GM12878 (cell line): ENCODE measurements at regions of chr3 and their contacts with region 1.

Region 1: GRCh38 chr3:8769088-8769822 is at the start of gene OXTR:
- DNase-seq: no peak
- ATAC-seq: peak; percentile 83
- H3K4me3 ChIP-seq: peak within 1 kb of the TSS; percentile 72
- H3K27ac ChIP-seq: peak within 1 kb of the TSS; percentile 18; the same call in 1 of the 2 replicates
- H3K4me1 ChIP-seq: peaks cover 14% of the 10 kb centered on the region; the same call in 1 of the 2 replicates
- H3K27me3 ChIP-seq: no peaks in the 10 kb centered on the region
- CTCF ChIP-seq: peak; percentile 96 to 98 (median 98); a peak in 5 of 6 replicates
- EP300 ChIP-seq: no peak
- POLR2A ChIP-seq: 0 out of 2 replicates have a peak, but pooled peaks have one; percentile 16
- RAD21 ChIP-seq: peak; percentile 70
- polyA plus RNA-seq, gene OXTR: 0.43 to 1.2 TPM

Region 2: GRCh38 chr3:8201886-8202285 is 567.4 kb before region 1 on chr3:
- CTCF ChIA-PET with region 1: no interaction called
- POLR2A ChIA-PET with region 1: no interaction called
- RAD21 ChIA-PET with region 1: no interaction called
- SMC1A ChIA-PET with region 1: no interaction called
- in situ Hi-C with region 1: no loop called
- intact Hi-C with region 1: no loop called
- DNase-seq: no peak
- ATAC-seq: no peak
- H3K4me3 ChIP-seq: no peak overlapping the region
- H3K27ac ChIP-seq: no peak overlapping the region
- H3K4me1 ChIP-seq: no peaks in the 10 kb centered on the region
- H3K27me3 ChIP-seq: no peaks in the 10 kb centered on the region
- CTCF ChIP-seq: no peak
- EP300 ChIP-seq: no peak
- POLR2A ChIP-seq: no peak
- RAD21 ChIP-seq: no peak

Region 3: GRCh38 chr3:8663177-8664061 is 105.8 kb before region 1 on chr3:
- CTCF ChIA-PET with region 1: interaction called, 33 read pairs
- POLR2A ChIA-PET with region 1: interaction called, 3 read pairs
- RAD21 ChIA-PET with region 1: interaction called, 10 read pairs
- SMC1A ChIA-PET with region 1: interaction called, 8 read pairs
- in situ Hi-C with region 1: no loop called
- intact Hi-C with region 1: loop called (anchors 1 kb)
- DNase-seq: peak; percentile 36
- ATAC-seq: peak; percentile 56
- H3K4me3 ChIP-seq: no peak overlapping the region
- H3K27ac ChIP-seq: no peak overlapping the region
- H3K4me1 ChIP-seq: peaks cover 24% of the 10 kb centered on the region
- H3K27me3 ChIP-seq: no peaks in the 10 kb centered on the region
- CTCF ChIP-seq: peak; percentile 54 to 68 (median 58)
- EP300 ChIP-seq: no peak
- POLR2A ChIP-seq: no peak
- RAD21 ChIP-seq: peak; percentile 64

Region 4: DNA sequence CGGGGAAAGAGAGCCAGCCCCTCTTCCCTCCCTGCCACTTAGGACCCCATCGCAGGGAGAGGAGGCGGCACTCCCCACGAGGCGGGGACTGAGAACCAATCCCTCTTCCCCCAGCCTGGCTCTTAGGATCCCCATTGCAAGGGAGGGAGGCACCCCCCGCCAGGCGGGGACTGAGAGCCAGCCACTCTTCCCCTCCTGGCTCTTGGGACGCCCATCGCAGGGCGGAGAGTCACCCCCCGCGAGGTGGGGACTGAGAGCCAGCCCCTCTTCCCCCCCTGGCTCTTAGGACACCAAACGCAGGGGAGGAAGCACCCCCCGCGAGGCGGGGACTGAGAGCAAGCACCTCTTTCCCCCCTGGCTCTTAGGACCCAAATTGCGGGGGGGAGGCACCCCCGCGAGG is 90.5 kb before region 1 on chr3:
- CTCF ChIA-PET with region 1: interaction called, 6 read pairs
- POLR2A ChIA-PET with region 1: no interaction called
- RAD21 ChIA-PET with region 1: no interaction called
- SMC1A ChIA-PET with region 1: interaction called, 4 read pairs
- in situ Hi-C with region 1: no loop called
- intact Hi-C with region 1: loop called (anchors 5 kb)
- DNase-seq: no peak
- ATAC-seq: no peak
- H3K4me3 ChIP-seq: no peak overlapping the region
- H3K27ac ChIP-seq: no peak overlapping the region
- H3K4me1 ChIP-seq: no peaks in the 10 kb centered on the region
- H3K27me3 ChIP-seq: no peaks in the 10 kb centered on the region
- CTCF ChIP-seq: no peak
- EP300 ChIP-seq: no peak
- POLR2A ChIP-seq: no peak
- RAD21 ChIP-seq: no peak

Region 5: GRCh38 chr3:8757551-8758518 is 11.4 kb before region 1 on chr3:
- CTCF ChIA-PET with region 1: interaction called, 38 read pairs
- POLR2A ChIA-PET with region 1: no interaction called
- RAD21 ChIA-PET with region 1: no interaction called
- SMC1A ChIA-PET with region 1: interaction called, 3 read pairs
- in situ Hi-C with region 1: no loop called
- intact Hi-C with region 1: no loop called
- DNase-seq: no peak
- ATAC-seq: peak; percentile 71
- H3K4me3 ChIP-seq: no peak overlapping the region
- H3K27ac ChIP-seq: no peak overlapping the region
- H3K4me1 ChIP-seq: no peaks in the 10 kb centered on the region; the same call in 1 of the 2 replicates
- H3K27me3 ChIP-seq: no peaks in the 10 kb centered on the region
- CTCF ChIP-seq: no peak
- EP300 ChIP-seq: no peak
- POLR2A ChIP-seq: no peak
- RAD21 ChIP-seq: no peak

Region 6: GRCh38 chr3:8784676-8785435 is 15.6 kb after region 1 on chr3:
- CTCF ChIA-PET with region 1: interaction called, 10 read pairs
- POLR2A ChIA-PET with region 1: no interaction called
- RAD21 ChIA-PET with region 1: no interaction called
- SMC1A ChIA-PET with region 1: interaction called, 3 read pairs
- in situ Hi-C with region 1: no loop called
- intact Hi-C with region 1: no loop called
- DNase-seq: no peak
- ATAC-seq: no peak
- H3K4me3 ChIP-seq: no peak overlapping the region
- H3K27ac ChIP-seq: no peak overlapping the region
- H3K4me1 ChIP-seq: no peaks in the 10 kb centered on the region
- H3K27me3 ChIP-seq: no peaks in the 10 kb centered on the region
- CTCF ChIP-seq: no peak
- EP300 ChIP-seq: no peak
- POLR2A ChIP-seq: no peak
- RAD21 ChIP-seq: no peak

Region 7: GRCh38 chr3:8954938-8955763 is 185.9 kb after region 1 on chr3:
- CTCF ChIA-PET with region 1: interaction called, 5 read pairs
- POLR2A ChIA-PET with region 1: no interaction called
- RAD21 ChIA-PET with region 1: interaction called, 5 read pairs
- SMC1A ChIA-PET with region 1: interaction called, 3 read pairs
- in situ Hi-C with region 1: no loop called
- intact Hi-C with region 1: loop called (anchors 5 kb)
- DNase-seq: peak; percentile 56
- ATAC-seq: peak; percentile 89
- H3K4me3 ChIP-seq: no peak overlapping the region
- H3K27ac ChIP-seq: peak overlapping the region; percentile 51
- H3K4me1 ChIP-seq: peaks cover 8% of the 10 kb centered on the region; the same call in 1 of the 2 replicates
- H3K27me3 ChIP-seq: no peaks in the 10 kb centered on the region
- CTCF ChIP-seq: no peak; a peak in 1 of 6 replicates
- EP300 ChIP-seq: peak in 1 of 2 experiments; percentile 67; a peak in 2 of 4 replicates
- POLR2A ChIP-seq: no peak
- RAD21 ChIP-seq: no peak